Activated CD4-positive, alpha-beta memory T cell treated with anti-CD3 and anti-CD28 coated beads, Interleukin-2, amount 10 ng/mL, durations not matched to agents 7 days and 5 days (primary cell): ENCODE measurements at regions of chr20 and their contacts with region 1.

Region 1: GRCh38 chr20:34676642-34677373 is at the start of gene PIGU:
- DNase-seq: peak; percentile 98
- H3K4me3 Mint-ChIP-seq: peak within 1 kb of the TSS; percentile 98
- H3K27ac Mint-ChIP-seq: peak within 1 kb of the TSS; percentile 88
- H3K4me1 Mint-ChIP-seq: peaks cover 36% of the 10 kb centered on the region
- H3K27me3 Mint-ChIP-seq: no peaks in the 10 kb centered on the region
- total RNA-seq, gene PIGU: 18.3 to 18.6 TPM

Region 2: GRCh38 chr20:34420146-34420545 is 256.7 kb before region 1 on chr20:
- CTCF ChIA-PET with region 1: no interaction called
- POLR2A ChIA-PET with region 1: no interaction called
- DNase-seq: no peak
- H3K4me3 Mint-ChIP-seq: no peak overlapping the region
- H3K27ac Mint-ChIP-seq: no peak overlapping the region
- H3K4me1 Mint-ChIP-seq: peaks cover 16% of the 10 kb centered on the region
- H3K27me3 Mint-ChIP-seq: no peaks in the 10 kb centered on the region

Region 3: GRCh38 chr20:34558320-34559218 is 118.2 kb before region 1 on chr20 and contains the start of gene MAP1LC3A:
- CTCF ChIA-PET with region 1: no interaction called
- POLR2A ChIA-PET with region 1: interaction called, 10 read pairs
- DNase-seq: peak; percentile 95
- H3K4me3 Mint-ChIP-seq: peak within 1 kb of the TSS; percentile 76
- H3K27ac Mint-ChIP-seq: peak within 1 kb of the TSS; percentile 58
- H3K4me1 Mint-ChIP-seq: peaks cover 18% of the 10 kb centered on the region
- H3K27me3 Mint-ChIP-seq: no peaks in the 10 kb centered on the region
- total RNA-seq, gene MAP1LC3A: 8.9 to 10.5 TPM